ENCODE measurements at regions of chr13 and their contacts with region 1.

Region 1: DNA sequence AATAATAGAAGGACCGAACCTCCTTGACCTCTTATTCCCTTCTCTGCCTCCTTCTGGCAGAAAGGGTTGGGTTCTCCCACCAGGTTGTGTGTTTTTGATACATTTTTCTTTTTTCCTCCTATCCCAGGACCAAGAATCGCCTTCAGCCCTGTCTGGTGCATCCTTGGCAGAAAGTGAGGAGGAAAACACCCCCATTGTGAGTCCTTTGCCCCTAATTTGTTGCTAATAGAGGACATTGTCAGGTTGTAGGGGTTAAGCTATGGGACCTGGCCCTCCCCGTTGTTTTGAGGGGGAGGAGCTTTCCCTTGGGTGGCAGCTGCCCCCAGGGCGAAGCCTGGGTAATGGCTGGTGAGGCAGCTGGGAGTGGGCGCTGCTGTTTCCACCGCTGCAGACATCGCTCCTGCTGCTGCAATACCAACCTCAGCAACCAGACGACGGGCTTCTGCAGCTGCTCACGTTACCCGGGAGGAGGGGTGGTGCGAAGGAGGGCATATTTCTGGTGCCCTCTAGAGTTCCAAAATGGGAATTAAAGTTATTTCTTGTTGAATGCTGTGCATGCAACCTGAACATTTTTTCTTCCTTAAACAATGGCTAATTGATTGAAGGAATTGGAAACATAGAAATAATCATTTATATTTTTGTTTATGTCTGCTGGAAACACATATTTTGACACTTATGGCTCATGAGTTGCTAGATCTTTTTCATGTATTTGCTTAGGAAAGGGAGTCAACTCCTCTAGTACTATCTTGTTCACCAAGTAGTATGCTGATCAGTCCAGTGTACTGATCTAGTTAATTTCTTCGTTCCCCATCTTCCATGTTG is 1.5 kb downstream of the ZMYM2 start:
- DNase-seq: peak; percentile 65 to 92
- H3K4me3 ChIP-seq: peak overlapping the region; percentile 75 to 88
- H3K27ac ChIP-seq: peak overlapping the region; percentile 98 to 99
- H3K4me1 ChIP-seq: peaks cover 0 to 31% of the 10 kb centered on the region in 2 donors
- H3K27me3 ChIP-seq: no peaks in the 10 kb centered on the region
- CTCF ChIP-seq: peak; percentile 85 to 92 (median 92)

Region 2: GRCh38 chr13:19633479-19634255 is 326.4 kb before region 1 on chr13 and contains the start of gene MPHOSPH8:
- intact Hi-C with region 1: loop called (anchors 2 kb)
- DNase-seq: peak; percentile 80 to 97
- H3K4me3 ChIP-seq: peak within 1 kb of the TSS; percentile 71 to 93
- H3K27ac ChIP-seq: peak within 1 kb of the TSS; percentile 92 to 93
- H3K4me1 ChIP-seq: peaks cover 5 to 23% of the 10 kb centered on the region in 2 donors
- H3K27me3 ChIP-seq: no peaks in the 10 kb centered on the region
- CTCF ChIP-seq: no peak
- total RNA-seq, gene MPHOSPH8: 18.5 TPM

Region 3: DNA sequence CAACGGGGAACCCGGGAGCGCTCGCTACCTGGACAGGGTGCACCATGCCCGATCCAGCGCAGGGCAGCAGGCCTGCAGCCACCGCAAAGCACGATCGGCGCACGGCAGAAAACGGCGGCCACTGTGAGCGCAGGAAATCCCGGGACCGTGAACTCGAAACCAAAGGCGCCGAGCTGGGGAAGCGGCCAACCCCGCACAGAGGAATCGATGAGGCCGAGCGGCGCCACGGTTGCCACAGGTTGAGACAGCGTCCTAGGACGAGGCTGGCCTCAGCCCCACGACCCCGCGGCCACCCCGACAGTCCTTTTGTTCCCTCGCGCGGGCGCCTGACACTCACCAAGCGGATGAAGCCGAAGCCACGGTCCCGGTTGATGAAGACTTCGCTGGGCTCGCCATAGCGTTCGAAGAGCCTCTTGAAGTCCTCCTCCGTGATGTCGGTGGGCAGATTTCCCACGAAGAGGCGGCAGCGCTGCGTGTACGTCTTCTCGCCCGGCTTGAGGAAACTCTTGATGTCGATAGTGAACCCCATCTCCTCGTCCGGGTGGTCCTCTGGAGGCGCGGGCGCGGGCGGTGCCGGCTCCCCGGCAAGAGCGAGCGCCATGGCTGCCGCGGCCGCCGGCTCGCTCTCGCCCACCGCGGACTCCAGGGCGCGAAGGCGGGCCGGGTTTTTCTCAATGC is 177.9 kb before region 1 on chr13:
- intact Hi-C with region 1: loop called (anchors 2 kb)
- DNase-seq: peak in 1 of 2 donors; percentile 70
- H3K4me3 ChIP-seq: peak overlapping the region; percentile 77 to 83
- H3K27ac ChIP-seq: peak overlapping the region; percentile 89 to 95
- H3K4me1 ChIP-seq: peaks cover 0 to 6% of the 10 kb centered on the region in 2 donors
- H3K27me3 ChIP-seq: no peaks in the 10 kb centered on the region
- CTCF ChIP-seq: no peak

Region 4: DNA sequence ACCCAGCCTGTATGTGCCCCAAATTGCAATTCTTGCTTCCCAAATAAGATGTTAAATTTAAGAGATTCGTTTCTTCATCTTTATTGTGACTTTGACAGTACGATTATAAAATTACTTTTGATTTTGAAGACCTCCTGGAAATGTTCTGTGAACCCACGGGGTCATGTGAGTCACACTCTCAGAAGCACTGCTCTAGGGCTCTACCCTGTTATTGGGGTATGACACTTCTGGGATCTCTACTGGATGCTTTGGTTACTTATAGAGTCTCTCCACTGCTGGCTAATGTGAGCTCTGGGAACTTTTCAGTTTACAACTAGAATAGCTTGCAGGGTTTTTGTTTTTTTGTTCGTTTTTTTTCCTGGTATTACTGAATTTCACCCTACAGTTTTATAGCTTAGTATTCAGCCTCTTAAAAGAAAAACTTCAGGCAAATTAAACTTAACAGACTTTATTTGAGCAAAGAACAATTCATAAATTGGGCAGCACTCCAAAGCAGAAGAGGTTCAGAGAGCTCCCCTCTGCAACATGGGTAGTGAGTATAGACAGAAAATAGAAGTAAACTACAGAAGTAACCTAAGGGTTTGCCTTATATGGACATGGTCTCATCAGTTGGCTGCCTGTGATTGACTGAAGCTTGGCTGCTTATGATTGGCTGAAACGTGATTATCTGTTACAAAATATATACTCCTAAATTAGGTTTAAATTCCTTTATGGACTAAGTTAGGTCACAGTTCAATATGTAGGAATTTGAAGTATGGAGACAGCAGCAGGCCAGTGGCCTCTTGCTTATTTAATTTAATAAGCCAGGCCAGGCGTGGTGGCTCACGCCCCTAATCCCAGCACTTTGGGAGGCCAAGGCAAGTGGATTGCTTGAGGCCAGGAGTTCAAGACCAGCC is 148.8 kb before region 1 on chr13:
- intact Hi-C with region 1: no loop called
- DNase-seq: no peak
- H3K4me3 ChIP-seq: no peak overlapping the region
- H3K27ac ChIP-seq: no peak overlapping the region
- H3K4me1 ChIP-seq: no peaks in the 10 kb centered on the region
- H3K27me3 ChIP-seq: no peaks in the 10 kb centered on the region
- CTCF ChIP-seq: no peak

Region 5: DNA sequence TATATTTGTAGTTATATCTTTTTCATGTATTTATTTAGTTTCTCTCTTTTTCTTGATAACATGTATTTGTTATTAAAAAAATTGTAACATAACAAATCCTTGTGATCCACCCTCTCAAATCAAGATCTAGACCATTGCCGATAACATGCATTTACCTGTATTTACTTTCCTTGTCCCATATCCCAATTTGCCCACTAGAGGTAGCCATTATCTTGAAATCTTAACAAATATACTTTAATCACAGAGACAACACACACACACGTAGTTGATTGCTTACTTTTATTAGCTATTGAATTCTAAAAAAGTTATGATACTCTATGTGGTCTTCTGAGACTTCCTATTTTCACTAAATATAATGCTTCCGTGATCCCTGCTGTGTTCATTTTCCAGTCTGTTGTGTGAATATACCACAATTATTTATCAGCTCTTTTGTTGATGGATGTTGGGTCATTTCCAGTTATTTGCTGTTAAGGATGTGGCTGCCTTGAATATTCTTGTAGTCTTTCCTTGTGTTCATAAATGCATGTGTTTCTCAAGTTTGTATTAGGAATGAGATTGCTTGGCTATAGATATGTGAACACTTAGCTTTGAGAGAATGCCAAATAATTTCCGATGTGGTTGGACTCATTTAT is 32.8 kb before region 1 on chr13:
- intact Hi-C with region 1: loop called (anchors 5 kb)
- DNase-seq: no peak
- H3K4me3 ChIP-seq: no peak overlapping the region
- H3K27ac ChIP-seq: no peak overlapping the region
- H3K4me1 ChIP-seq: no peaks in the 10 kb centered on the region
- H3K27me3 ChIP-seq: no peaks in the 10 kb centered on the region
- CTCF ChIP-seq: peak; percentile 15 to 42 (median 26)

Region 6: GRCh38 chr13:20703780-20704445 is 743.9 kb after region 1 on chr13:
- intact Hi-C with region 1: loop called (anchors 10 kb)
- DNase-seq: peak in 1 of 2 donors; percentile 84
- H3K4me3 ChIP-seq: peak overlapping the region; percentile 70 to 95
- H3K27ac ChIP-seq: peak overlapping the region in 1 of 2 donors; percentile 38
- H3K4me1 ChIP-seq: peaks cover 3% of the 10 kb centered on the region in 2 donors
- H3K27me3 ChIP-seq: no peaks in the 10 kb centered on the region
- CTCF ChIP-seq: peak; percentile 16 to 81 (median 42)

Measured in ascending aorta (tissue), 2 donors.